Mammary epithelial cell (primary cell): ENCODE measurements at regions of chr14 and their contacts with region 1.

Region 1: GRCh38 chr14:32611752-32612151 is 282.7 kb downstream of the AKAP6 start:
- DNase-seq: peak; percentile 69
- H3K4me3 ChIP-seq: no peak overlapping the region
- H3K27ac ChIP-seq: peak overlapping the region; percentile 9
- H3K4me1 ChIP-seq: peaks cover 21% of the 10 kb centered on the region
- H3K27me3 ChIP-seq: no peaks in the 10 kb centered on the region
- CTCF ChIP-seq: no peak

Region 2: GRCh38 chr14:32560209-32560857 is 51.4 kb before region 1 on chr14:
- CTCF ChIA-PET with region 1: no interaction called
- dilution Hi-C with region 1: no loop called
- in situ Hi-C with region 1: no loop called
- intact Hi-C with region 1: no loop called
- DNase-seq: peak; percentile 74
- H3K4me3 ChIP-seq: no peak overlapping the region
- H3K27ac ChIP-seq: peak overlapping the region; percentile 53
- H3K4me1 ChIP-seq: peaks cover 19% of the 10 kb centered on the region
- H3K27me3 ChIP-seq: no peaks in the 10 kb centered on the region
- CTCF ChIP-seq: peak; percentile 84 to 98

Region 3: DNA sequence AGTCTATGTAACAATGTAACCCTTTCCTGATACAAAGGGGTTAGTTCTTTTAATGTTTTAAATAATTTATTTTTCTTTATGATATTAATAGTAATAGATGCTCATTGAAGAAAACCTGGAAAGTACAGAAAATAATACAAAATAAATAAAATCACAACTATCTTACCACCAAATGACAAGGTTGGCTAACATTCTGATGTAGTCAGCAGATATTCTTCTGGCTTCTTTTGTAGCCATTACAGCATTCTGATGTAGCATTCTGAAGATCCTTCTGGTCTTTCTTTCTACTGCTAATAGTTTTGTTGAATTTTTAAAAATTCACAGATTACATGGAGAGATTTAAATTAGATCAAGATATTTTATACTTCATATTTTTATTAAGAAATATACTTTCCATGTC is 18.9 kb after region 1 on chr14:
- CTCF ChIA-PET with region 1: no interaction called
- dilution Hi-C with region 1: no loop called
- in situ Hi-C with region 1: no loop called
- intact Hi-C with region 1: loop called (anchors 1 kb)
- DNase-seq: no peak
- H3K4me3 ChIP-seq: no peak overlapping the region
- H3K27ac ChIP-seq: no peak overlapping the region
- H3K4me1 ChIP-seq: no peaks in the 10 kb centered on the region
- H3K27me3 ChIP-seq: no peaks in the 10 kb centered on the region
- CTCF ChIP-seq: no peak

Region 4: DNA sequence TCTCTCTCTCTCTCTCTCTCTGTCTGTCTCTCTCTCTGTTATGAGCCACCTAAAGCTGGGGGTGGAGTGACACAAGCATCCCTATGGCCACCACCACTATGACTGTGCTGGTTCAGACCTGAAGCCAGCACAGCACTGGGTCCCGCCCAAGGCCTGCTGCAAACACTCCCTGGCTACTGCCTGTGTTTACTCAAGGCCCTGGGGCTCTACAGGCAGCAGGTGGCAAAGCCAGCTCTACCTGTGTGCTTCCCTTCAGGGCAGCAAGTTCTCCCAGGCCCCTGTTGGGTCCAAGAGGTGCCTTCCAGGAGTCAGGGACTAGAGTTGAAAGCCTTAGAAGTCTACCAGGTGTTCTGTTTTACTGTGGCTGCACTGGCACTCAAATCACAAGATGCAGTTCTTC is 133.7 kb after region 1 on chr14:
- CTCF ChIA-PET with region 1: no interaction called
- dilution Hi-C with region 1: no loop called
- in situ Hi-C with region 1: no loop called
- intact Hi-C with region 1: no loop called
- DNase-seq: peak; percentile 42
- H3K4me3 ChIP-seq: no peak overlapping the region
- H3K27ac ChIP-seq: no peak overlapping the region
- H3K4me1 ChIP-seq: peaks cover 8% of the 10 kb centered on the region
- H3K27me3 ChIP-seq: no peaks in the 10 kb centered on the region
- CTCF ChIP-seq: no peak